Natural killer cell (primary cell): ENCODE measurements at regions of chr12 and their contacts with region 1.

Region 1: GRCh38 chr12:96489103-96490056 is at the start of gene CFAP54:
- DNase-seq: peak; percentile 96 to 99
- ATAC-seq: peak; percentile 94 to 96 (median 95)
- H3K4me3 ChIP-seq: peak within 1 kb of the TSS; percentile 61
- H3K4me3 Mint-ChIP-seq: peak within 1 kb of the TSS; percentile 90
- H3K27ac ChIP-seq: peak within 1 kb of the TSS; percentile 44
- H3K27ac Mint-ChIP-seq: peak within 1 kb of the TSS; percentile 88 to 93
- H3K4me1 ChIP-seq: peaks cover 23% of the 10 kb centered on the region
- H3K4me1 Mint-ChIP-seq: peaks cover 22 to 25% of the 10 kb centered on the region in 2 donors
- H3K27me3 ChIP-seq: no peaks in the 10 kb centered on the region
- H3K27me3 Mint-ChIP-seq: no peaks in the 10 kb centered on the region
- CTCF ChIP-seq: peak; percentile 82
- total RNA-seq, gene CFAP54: 0.56 to 1.5 (median 1.2) TPM

Region 2: DNA sequence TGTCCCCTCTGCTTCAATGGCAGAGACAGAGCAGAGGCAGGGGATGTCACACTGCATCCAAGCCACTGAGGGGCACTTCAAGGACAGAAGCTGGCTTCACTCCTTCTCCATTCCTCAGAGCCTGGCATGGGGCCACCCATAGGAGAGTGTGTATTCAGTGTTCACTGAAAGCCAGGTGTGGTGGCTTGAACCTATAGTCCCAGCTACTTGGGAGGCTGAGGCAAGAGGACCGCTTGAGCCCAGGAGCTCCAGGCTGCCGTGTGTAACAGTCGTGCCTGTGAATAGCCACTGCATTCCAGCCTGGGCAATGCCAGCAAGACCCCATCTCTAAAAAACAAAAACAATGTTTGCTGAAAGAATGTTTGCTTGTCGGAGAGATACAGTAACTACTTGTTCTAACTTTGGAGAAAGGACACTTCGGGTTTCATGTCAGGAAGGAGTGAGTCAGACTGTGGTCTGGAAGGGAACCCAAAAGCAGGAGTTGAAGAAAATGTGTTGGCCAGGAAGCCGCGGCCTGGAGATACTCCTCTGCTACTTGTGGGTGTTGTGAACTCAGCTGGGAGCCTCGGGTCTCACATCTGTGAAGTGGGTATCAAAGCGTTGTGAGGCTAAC is 251.8 kb before region 1 on chr12:
- intact Hi-C with region 1: loop called (anchors 1 kb)
- DNase-seq: peak; percentile 60 to 79
- ATAC-seq: peak; percentile 34 to 54 (median 36)
- H3K4me3 ChIP-seq: no peak overlapping the region
- H3K4me3 Mint-ChIP-seq: peak overlapping the region; percentile 77
- H3K27ac ChIP-seq: peak overlapping the region; percentile 56
- H3K27ac Mint-ChIP-seq: peak overlapping the region; percentile 87 to 95
- H3K4me1 ChIP-seq: peaks cover 75% of the 10 kb centered on the region
- H3K4me1 Mint-ChIP-seq: peaks cover 75 to 82% of the 10 kb centered on the region in 2 donors
- H3K27me3 ChIP-seq: no peaks in the 10 kb centered on the region
- H3K27me3 Mint-ChIP-seq: no peaks in the 10 kb centered on the region
- CTCF ChIP-seq: no peak

Region 3: DNA sequence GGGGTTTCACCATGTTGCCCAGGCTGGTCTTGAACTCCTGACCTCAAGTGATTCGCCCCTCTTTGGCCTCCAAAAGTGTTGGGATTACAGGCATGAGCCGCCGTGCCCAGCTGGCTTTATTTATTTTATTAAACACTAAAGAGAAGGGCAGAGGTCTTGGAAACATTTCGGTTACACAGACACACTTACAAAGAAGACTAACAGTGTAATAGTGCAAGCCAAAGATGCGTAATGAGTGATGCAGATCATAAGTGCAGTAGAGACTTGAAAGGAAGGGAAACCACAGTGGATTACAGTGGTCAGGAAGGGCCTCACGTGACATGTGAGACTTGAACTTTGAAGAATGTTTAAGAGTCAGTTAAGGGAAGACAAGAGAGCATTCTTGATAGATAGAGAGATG is 55.3 kb before region 1 on chr12:
- intact Hi-C with region 1: loop called (anchors 1 kb)
- DNase-seq: peak; percentile 69 to 94
- ATAC-seq: peak; percentile 97 to 100 (median 97)
- H3K4me3 ChIP-seq: no peak overlapping the region
- H3K4me3 Mint-ChIP-seq: peak overlapping the region; percentile 36
- H3K27ac ChIP-seq: peak overlapping the region; percentile 79
- H3K27ac Mint-ChIP-seq: peak overlapping the region; percentile 68 to 86
- H3K4me1 ChIP-seq: peaks cover 22% of the 10 kb centered on the region
- H3K4me1 Mint-ChIP-seq: peaks cover 6 to 11% of the 10 kb centered on the region in 2 donors
- H3K27me3 ChIP-seq: no peaks in the 10 kb centered on the region
- H3K27me3 Mint-ChIP-seq: no peaks in the 10 kb centered on the region
- CTCF ChIP-seq: no peak

Region 4: DNA sequence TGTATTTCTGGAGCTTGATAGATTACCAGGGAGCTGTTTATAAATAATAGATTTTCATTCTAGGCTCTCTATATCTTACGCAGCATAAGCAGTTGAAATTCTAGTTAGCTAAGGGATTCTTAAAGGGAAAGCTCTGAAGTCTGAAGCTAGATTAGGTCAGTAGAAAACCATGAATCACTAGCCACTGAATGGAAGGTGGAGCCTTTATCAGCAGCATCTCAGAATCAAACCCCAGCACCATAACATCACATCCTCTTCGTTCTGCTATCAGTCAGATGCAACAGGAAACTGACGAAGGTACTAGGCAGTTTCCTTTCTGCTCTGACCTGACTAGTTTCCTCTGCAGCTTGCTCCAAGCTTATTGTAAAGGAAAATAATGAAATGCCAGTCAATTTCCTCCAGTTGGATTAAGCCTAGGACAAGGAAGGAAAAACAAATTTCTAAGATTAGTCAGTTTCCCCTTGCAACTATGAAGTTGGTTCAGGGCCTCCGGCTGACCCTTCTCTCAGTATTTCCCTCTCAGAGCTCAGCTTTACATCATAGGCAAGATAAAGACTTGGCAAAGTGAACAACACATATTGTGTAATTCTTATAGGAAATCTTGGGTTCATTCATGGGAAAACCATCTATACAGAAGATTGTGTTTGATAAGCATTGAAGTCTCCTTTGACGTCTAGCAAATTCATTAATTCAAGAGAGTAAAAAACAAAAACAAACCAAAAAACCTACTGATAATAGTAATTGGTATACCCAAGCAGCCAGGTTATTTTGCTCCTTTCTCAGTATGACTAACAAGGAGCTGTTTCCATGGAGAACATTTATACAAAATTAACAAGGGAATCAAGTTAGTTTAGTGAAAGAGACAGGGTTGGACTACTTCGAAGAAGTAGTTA is 43.4 kb before region 1 on chr12:
- intact Hi-C with region 1: loop called (anchors 5 kb)
- DNase-seq: peak; percentile 33 to 92
- ATAC-seq: peak; percentile 89 to 96 (median 94)
- H3K4me3 ChIP-seq: no peak overlapping the region
- H3K4me3 Mint-ChIP-seq: peak overlapping the region; percentile 75
- H3K27ac ChIP-seq: peak overlapping the region; percentile 92
- H3K27ac Mint-ChIP-seq: peak overlapping the region; percentile 96 to 99
- H3K4me1 ChIP-seq: peaks cover 28% of the 10 kb centered on the region
- H3K4me1 Mint-ChIP-seq: peaks cover 35 to 38% of the 10 kb centered on the region in 2 donors
- H3K27me3 ChIP-seq: no peaks in the 10 kb centered on the region
- H3K27me3 Mint-ChIP-seq: no peaks in the 10 kb centered on the region
- CTCF ChIP-seq: no peak

Region 5: GRCh38 chr12:96516472-96517430 is 27.4 kb after region 1 on chr12:
- intact Hi-C with region 1: loop called (anchors 1 kb)
- DNase-seq: peak; percentile 77 to 93
- ATAC-seq: peak; percentile 87 to 95 (median 93)
- H3K4me3 ChIP-seq: no peak overlapping the region
- H3K4me3 Mint-ChIP-seq: peak overlapping the region; percentile 13
- H3K27ac ChIP-seq: no peak overlapping the region
- H3K27ac Mint-ChIP-seq: peak overlapping the region; percentile 62 to 80
- H3K4me1 ChIP-seq: peaks cover 2% of the 10 kb centered on the region
- H3K4me1 Mint-ChIP-seq: peaks cover 4 to 6% of the 10 kb centered on the region in 2 donors
- H3K27me3 ChIP-seq: no peaks in the 10 kb centered on the region
- H3K27me3 Mint-ChIP-seq: peaks cover 0 to 4% of the 10 kb centered on the region in 2 donors
- CTCF ChIP-seq: peak; percentile 84

Region 6: GRCh38 chr12:96606134-96606533 is 116.8 kb after region 1 on chr12:
- intact Hi-C with region 1: no loop called
- DNase-seq: no peak
- ATAC-seq: no peak
- H3K4me3 ChIP-seq: no peak overlapping the region
- H3K4me3 Mint-ChIP-seq: no peak overlapping the region
- H3K27ac ChIP-seq: no peak overlapping the region
- H3K27ac Mint-ChIP-seq: no peak overlapping the region
- H3K4me1 ChIP-seq: no peaks in the 10 kb centered on the region
- H3K4me1 Mint-ChIP-seq: no peaks in the 10 kb centered on the region
- H3K27me3 ChIP-seq: peaks cover 2% of the 10 kb centered on the region
- H3K27me3 Mint-ChIP-seq: peaks cover 31 to 54% of the 10 kb centered on the region in 2 donors
- CTCF ChIP-seq: no peak